Activated CD4-positive, alpha-beta T cell treated with anti-CD3 and anti-CD28 coated beads for 36 hours (primary cell): ENCODE measurements at regions of chr21 and their contacts with region 1.

Region 1: DNA sequence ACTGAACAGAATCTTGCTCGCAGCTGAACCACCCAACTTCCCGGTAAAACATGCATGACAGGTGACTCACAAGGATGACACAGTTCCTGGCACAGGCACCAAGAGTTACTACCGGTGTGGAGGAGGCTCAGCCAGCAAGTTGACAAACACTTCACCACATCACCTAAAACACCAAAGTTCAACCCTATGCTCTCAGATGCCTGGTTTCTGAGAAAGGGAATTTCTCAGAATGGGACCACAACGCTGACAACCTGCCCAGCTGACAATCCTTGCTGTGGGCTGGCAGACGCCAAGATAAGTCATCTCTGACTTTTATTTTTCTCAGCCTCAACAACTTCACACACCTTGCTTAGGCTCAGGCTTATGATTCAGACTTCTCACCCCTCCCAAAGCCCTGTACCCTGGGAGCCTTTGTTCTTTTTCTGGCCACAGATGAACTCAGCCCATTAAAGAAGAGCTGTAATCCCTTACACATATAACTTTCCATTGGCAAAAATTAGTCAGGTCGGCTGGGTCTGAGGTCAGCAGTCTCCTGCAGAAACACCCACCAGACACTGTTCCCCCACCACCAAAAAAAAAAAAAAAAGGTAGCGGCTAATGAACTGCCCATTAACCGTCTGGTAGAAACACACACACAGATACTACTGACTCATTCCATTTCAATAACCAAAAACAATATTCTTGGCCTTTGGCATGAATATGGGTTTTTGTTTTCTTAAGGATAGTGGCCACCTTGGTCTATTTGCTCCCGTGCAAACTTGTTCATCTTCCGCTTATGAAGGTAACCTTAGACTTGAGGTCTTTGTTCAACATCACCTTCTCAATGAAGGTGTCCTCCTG is 10.8 kb upstream of the TIAM1 start:
- DNase-seq: peak; percentile 88
- ATAC-seq: peak; percentile 88
- H3K4me3 Mint-ChIP-seq: peak overlapping the region; percentile 49
- H3K27ac Mint-ChIP-seq: peak overlapping the region; percentile 82
- H3K4me1 Mint-ChIP-seq: peaks cover 53% of the 10 kb centered on the region
- H3K27me3 Mint-ChIP-seq: no peaks in the 10 kb centered on the region

Region 2: DNA sequence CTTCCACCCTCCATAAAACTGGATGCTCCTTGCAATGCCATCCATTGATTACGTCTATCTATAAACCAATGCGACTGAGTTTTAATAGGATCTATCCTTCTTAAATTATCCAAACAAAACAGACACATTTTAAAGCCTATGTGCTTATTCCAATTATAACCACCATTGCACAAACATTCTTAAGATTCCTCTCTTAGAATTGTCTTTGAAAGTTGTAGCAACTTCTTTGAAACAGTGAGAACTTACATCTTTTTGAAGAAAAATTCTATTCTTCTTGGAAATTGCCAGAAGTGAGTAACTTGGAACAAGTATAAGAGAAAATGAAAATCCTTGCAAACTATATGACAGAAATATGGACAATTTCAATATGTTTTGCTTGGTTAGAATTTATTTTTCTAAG is 1034.6 kb before region 1 on chr21 and contains the start of gene KRTAP26-1:
- CTCF ChIA-PET with region 1: no interaction called
- POLR2A ChIA-PET with region 1: no interaction called
- intact Hi-C with region 1: no loop called
- DNase-seq: no peak
- ATAC-seq: no peak
- H3K4me3 Mint-ChIP-seq: no peak within 1 kb of the TSS
- H3K27ac Mint-ChIP-seq: no peak within 1 kb of the TSS
- H3K4me1 Mint-ChIP-seq: no peaks in the 10 kb centered on the region
- H3K27me3 Mint-ChIP-seq: peaks cover 6% of the 10 kb centered on the region
- total RNA-seq, gene KRTAP26-1: not detected

Region 3: GRCh38 chr21:31180256-31181081 is 174.4 kb before region 1 on chr21:
- CTCF ChIA-PET with region 1: no interaction called
- POLR2A ChIA-PET with region 1: no interaction called
- intact Hi-C with region 1: loop called in 1 of 2 experiments (anchors 1 kb)
- DNase-seq: peak; percentile 48
- ATAC-seq: no peak
- H3K4me3 Mint-ChIP-seq: peak overlapping the region; percentile 91
- H3K27ac Mint-ChIP-seq: peak overlapping the region; percentile 99
- H3K4me1 Mint-ChIP-seq: peaks cover 77% of the 10 kb centered on the region
- H3K27me3 Mint-ChIP-seq: no peaks in the 10 kb centered on the region

Region 4: DNA sequence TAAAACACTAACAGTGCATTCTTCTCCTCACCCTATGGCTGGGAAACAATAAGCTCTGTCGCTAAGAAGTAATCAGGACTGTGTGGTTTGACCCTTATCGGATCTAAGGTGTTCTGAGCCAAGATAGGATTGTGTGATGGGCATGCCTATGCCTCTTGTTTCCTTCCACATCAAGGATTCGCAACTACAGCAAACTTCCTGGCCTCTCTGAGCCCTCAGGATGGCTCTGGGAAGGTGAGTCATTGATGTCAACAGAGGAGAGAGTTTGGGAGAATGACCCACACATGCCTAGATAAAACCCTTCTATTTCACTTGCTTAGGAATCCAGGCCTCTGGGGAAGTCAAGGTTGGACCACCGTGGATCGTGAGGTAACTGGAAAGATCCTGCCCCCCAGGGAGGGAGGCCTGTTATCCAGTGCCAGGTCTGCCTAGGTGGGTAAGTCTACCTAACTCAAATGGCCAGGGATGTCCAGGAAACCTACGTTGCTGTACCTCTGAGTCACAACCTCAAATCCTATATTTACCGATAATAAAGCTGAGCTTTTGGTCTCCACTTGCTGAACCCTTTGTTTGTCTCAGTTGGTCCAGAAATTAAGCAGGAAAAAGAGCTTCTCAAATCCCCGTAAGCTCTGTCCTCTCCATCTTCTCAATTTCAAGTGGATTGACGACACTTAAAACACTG is 38.2 kb before region 1 on chr21:
- CTCF ChIA-PET with region 1: no interaction called
- POLR2A ChIA-PET with region 1: no interaction called
- intact Hi-C with region 1: no loop called
- DNase-seq: no peak
- ATAC-seq: no peak
- H3K4me3 Mint-ChIP-seq: no peak overlapping the region
- H3K27ac Mint-ChIP-seq: no peak overlapping the region
- H3K4me1 Mint-ChIP-seq: peaks cover 14% of the 10 kb centered on the region
- H3K27me3 Mint-ChIP-seq: no peaks in the 10 kb centered on the region

Region 5: GRCh38 chr21:31326522-31327242 is 28.1 kb before region 1 on chr21:
- CTCF ChIA-PET with region 1: interaction called, 6 read pairs
- POLR2A ChIA-PET with region 1: interaction called, 9 read pairs
- intact Hi-C with region 1: loop called (anchors 1 kb)
- DNase-seq: peak; percentile 80
- ATAC-seq: peak; percentile 93
- H3K4me3 Mint-ChIP-seq: peak overlapping the region; percentile 28
- H3K27ac Mint-ChIP-seq: peak overlapping the region; percentile 89
- H3K4me1 Mint-ChIP-seq: peaks cover 32% of the 10 kb centered on the region
- H3K27me3 Mint-ChIP-seq: no peaks in the 10 kb centered on the region

Region 6: DNA sequence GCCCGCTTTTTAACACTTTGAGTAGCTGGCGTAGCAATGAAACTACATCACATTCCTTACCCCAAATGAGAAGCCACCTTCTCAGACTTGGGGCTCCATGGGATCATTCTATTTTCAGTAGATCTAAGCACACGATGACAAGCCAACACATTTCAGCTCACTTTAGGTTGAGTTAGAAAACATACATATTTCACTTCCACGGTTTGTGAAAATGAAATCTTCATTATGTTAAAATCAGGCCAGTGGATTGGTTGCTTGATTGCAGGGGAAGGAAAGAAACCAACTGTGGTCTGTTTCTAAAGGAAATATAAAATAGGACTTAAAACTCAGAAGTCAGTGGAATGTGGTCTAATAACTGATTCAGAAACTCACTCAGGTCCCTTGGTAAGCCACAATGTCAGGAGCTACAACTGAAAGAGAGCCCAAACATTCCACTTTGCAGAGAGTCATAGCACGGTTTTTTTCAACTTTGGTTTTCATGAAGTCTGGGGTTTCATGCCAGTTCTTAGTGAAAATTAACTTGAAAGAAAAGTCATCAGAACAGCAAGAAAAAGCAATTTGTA is 71.5 kb after region 1 on chr21:
- CTCF ChIA-PET with region 1: interaction called, 7 read pairs
- POLR2A ChIA-PET with region 1: no interaction called
- intact Hi-C with region 1: loop called (anchors 1 kb)
- DNase-seq: peak; percentile 22
- ATAC-seq: peak; percentile 89
- H3K4me3 Mint-ChIP-seq: peak overlapping the region; percentile 18
- H3K27ac Mint-ChIP-seq: peak overlapping the region; percentile 53
- H3K4me1 Mint-ChIP-seq: peaks cover 20% of the 10 kb centered on the region
- H3K27me3 Mint-ChIP-seq: no peaks in the 10 kb centered on the region

Region 7: DNA sequence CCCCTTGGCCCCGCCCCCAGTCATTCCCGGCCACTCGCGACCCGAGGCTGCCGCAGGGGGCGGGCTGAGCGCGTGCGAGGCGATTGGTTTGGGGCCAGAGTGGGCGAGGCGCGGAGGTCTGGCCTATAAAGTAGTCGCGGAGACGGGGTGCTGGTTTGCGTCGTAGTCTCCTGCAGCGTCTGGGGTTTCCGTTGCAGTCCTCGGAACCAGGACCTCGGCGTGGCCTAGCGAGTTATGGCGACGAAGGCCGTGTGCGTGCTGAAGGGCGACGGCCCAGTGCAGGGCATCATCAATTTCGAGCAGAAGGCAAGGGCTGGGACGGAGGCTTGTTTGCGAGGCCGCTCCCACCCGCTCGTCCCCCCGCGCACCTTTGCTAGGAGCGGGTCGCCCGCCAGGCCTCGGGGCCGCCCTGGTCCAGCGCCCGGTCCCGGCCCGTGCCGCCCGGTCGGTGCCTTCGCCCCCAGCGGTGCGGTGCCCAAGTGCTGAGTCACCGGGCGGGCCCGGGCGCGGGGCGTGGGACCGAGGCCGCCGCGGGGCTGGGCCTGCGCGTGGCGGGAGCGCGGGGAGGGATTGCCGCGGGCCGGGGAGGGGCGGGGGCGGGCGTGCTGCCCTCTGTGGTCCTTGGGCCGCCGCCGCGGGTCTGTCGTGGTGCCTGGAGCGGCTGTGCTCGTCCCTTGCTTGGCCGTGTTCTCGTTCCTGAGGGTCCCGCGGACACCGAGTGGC is 304.9 kb after region 1 on chr21 and contains the start of gene SOD1:
- CTCF ChIA-PET with region 1: no interaction called
- POLR2A ChIA-PET with region 1: no interaction called
- intact Hi-C with region 1: loop called in 1 of 2 experiments (anchors 1 kb)
- DNase-seq: peak; percentile 97
- ATAC-seq: peak; percentile 93
- H3K4me3 Mint-ChIP-seq: peak within 1 kb of the TSS; percentile 88
- H3K27ac Mint-ChIP-seq: peak within 1 kb of the TSS; percentile 99
- H3K4me1 Mint-ChIP-seq: peaks cover 68% of the 10 kb centered on the region
- H3K27me3 Mint-ChIP-seq: no peaks in the 10 kb centered on the region
- total RNA-seq, gene SOD1: 232 to 284 TPM

Region 8: GRCh38 chr21:31731802-31732596 is 377.2 kb after region 1 on chr21 and contains the start of gene SCAF4:
- CTCF ChIA-PET with region 1: no interaction called
- POLR2A ChIA-PET with region 1: no interaction called
- intact Hi-C with region 1: loop called in 1 of 2 experiments (anchors 5 kb)
- DNase-seq: peak; percentile 90
- ATAC-seq: peak; percentile 88
- H3K4me3 Mint-ChIP-seq: no peak within 1 kb of the TSS
- H3K27ac Mint-ChIP-seq: peak within 1 kb of the TSS; percentile 78
- H3K4me1 Mint-ChIP-seq: peaks cover 11% of the 10 kb centered on the region
- H3K27me3 Mint-ChIP-seq: no peaks in the 10 kb centered on the region
- total RNA-seq, gene SCAF4: 47.1 to 62.8 TPM

Region 9: GRCh38 chr21:31830701-31831100 is 475.9 kb after region 1 on chr21:
- CTCF ChIA-PET with region 1: no interaction called
- POLR2A ChIA-PET with region 1: no interaction called
- intact Hi-C with region 1: no loop called
- DNase-seq: no peak
- ATAC-seq: no peak
- H3K4me3 Mint-ChIP-seq: no peak overlapping the region
- H3K27ac Mint-ChIP-seq: no peak overlapping the region
- H3K4me1 Mint-ChIP-seq: no peaks in the 10 kb centered on the region
- H3K27me3 Mint-ChIP-seq: peaks cover 8% of the 10 kb centered on the region